AG04450 (cell line): ENCODE measurements at regions of chr7 and their contacts with region 1.

Region 1: DNA sequence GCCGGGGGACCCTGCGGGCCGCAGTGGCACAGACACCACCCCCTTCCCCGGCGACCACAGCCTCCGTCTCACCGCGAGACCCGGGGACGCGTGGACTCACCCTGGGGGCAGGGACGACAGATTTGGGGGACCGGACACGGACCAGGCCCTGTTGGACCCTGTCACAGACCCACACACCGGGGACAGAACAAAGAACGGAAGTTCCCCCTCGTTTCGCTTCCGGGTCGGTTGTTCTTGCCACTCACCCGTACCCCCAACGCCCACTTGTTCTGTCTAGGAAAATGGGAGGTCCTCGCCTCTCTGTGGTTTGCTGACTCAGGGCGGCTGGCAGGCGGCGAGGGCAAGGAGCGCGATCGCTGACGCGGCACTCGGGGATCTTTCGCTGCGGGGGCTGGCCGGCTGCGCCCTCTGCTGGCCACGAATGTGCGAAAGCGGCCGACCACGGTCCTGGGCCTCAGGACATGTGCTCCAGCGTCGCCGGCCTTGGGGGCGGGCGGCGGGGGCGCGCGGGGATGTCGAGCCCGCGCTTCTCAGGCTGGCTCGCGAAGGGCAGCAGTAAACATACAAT is at the start of gene ZNF3:
- DNase-seq: peak; percentile 99
- H3K4me3 ChIP-seq: peak within 1 kb of the TSS; percentile 95
- H3K27ac ChIP-seq: peak within 1 kb of the TSS; percentile 84
- H3K27me3 ChIP-seq: no peaks in the 10 kb centered on the region
- CTCF ChIP-seq: peak; percentile 81
- polyA plus RNA-seq, gene ZNF3: 35.3 and 37.0 TPM in 2 replicates

Region 2: DNA sequence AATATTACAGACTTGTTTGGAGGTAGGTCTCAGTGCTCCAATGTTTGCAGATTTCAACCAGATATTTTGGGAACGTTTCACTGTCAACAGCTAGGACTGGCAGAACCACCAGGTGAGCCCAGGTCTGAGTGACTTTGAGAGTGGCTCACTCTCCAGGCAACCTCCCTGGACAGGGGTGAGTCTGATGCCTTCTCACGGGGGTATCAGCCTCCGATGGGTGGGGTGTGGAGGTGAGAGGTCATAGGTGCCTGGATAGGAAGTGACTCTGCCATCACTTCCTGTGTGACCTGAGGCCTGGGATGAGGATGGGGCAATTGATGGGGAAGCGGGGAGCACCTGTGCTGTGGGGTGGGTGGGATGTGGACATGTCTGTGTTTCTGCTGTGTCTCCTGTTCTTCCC is 110.4 kb before region 1 on chr7:
- CTCF ChIA-PET with region 1: no interaction called
- POLR2A ChIA-PET with region 1: no interaction called
- DNase-seq: no peak
- H3K4me3 ChIP-seq: no peak overlapping the region
- H3K27ac ChIP-seq: no peak overlapping the region
- H3K27me3 ChIP-seq: peaks cover 20% of the 10 kb centered on the region
- CTCF ChIP-seq: no peak

Region 3: GRCh38 chr7:100061518-100062193 is 20.0 kb before region 1 on chr7:
- CTCF ChIA-PET with region 1: interaction called, 13 read pairs
- POLR2A ChIA-PET with region 1: interaction called, 3 read pairs
- DNase-seq: no peak
- H3K4me3 ChIP-seq: no peak overlapping the region
- H3K27ac ChIP-seq: no peak overlapping the region
- H3K27me3 ChIP-seq: no peaks in the 10 kb centered on the region
- CTCF ChIP-seq: no peak